AG04449 (cell line): ENCODE measurements at regions of chr22 and their contacts with region 1.

Region 1: DNA sequence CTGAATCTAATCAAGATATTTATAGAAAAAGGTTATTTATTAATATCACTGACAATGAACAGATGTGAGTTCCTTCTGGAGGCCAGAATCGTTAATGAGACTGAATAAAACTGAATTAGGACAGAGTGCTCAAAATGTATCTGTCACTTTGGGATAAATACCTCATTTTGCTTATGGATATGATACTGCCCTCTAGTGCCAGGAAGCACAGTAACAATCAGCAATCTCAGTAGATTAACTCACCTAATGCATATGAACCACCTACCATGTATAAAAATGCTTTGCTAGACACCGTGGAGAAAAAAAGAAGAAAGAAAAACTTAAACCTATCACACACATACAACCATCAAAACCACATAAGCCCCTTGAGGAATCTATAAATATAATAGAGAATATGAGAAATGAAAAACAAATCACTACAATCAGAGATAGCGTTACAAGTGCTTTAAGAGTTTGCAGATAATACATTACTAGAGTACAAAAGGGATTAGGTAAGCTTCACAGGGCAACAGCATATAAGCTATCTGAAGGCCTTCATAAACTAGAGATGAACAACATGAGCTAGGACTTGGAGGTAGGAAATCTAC is 117.4 kb downstream of the SGSM3 start:
- DNase-seq: no peak
- H3K4me3 ChIP-seq: no peak overlapping the region
- CTCF ChIP-seq: peak; percentile 67

Region 2: GRCh38 chr22:40449676-40450035 is 38.1 kb before region 1 on chr22:
- CTCF ChIA-PET with region 1: interaction called, 11 read pairs
- POLR2A ChIA-PET with region 1: no interaction called
- DNase-seq: peak; percentile 19
- H3K4me3 ChIP-seq: no peak overlapping the region
- CTCF ChIP-seq: no peak

Region 3: DNA sequence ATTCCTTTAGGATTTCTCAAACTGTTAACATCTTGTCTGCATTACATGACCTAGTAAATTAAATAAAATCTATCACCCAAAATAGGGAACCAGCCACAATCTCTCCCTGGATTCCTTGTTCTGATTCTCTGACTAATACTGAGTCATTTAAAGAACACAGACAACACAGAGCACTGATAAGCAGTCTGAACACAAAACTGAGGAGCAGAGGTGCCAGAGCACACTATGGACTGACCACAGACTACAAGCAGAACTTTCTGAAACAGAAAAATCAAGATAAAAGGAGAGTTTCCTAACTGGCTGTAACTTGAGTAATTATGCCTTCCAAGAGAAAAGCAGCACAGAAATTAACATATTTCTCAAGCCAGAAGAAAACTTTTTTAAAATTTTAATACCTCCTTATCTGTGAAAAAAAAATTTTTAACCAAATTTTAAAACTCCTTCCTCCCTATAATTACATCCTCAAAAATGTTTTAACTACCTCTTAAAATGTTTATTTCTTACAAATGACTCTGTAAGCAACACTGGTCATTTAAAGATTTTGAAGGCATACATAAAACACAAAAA is 11.5 kb after region 1 on chr22:
- CTCF ChIA-PET with region 1: interaction called, 19 read pairs
- POLR2A ChIA-PET with region 1: interaction called, 3 read pairs
- DNase-seq: peak; percentile 95
- H3K4me3 ChIP-seq: no peak overlapping the region
- CTCF ChIP-seq: no peak

Region 4: DNA sequence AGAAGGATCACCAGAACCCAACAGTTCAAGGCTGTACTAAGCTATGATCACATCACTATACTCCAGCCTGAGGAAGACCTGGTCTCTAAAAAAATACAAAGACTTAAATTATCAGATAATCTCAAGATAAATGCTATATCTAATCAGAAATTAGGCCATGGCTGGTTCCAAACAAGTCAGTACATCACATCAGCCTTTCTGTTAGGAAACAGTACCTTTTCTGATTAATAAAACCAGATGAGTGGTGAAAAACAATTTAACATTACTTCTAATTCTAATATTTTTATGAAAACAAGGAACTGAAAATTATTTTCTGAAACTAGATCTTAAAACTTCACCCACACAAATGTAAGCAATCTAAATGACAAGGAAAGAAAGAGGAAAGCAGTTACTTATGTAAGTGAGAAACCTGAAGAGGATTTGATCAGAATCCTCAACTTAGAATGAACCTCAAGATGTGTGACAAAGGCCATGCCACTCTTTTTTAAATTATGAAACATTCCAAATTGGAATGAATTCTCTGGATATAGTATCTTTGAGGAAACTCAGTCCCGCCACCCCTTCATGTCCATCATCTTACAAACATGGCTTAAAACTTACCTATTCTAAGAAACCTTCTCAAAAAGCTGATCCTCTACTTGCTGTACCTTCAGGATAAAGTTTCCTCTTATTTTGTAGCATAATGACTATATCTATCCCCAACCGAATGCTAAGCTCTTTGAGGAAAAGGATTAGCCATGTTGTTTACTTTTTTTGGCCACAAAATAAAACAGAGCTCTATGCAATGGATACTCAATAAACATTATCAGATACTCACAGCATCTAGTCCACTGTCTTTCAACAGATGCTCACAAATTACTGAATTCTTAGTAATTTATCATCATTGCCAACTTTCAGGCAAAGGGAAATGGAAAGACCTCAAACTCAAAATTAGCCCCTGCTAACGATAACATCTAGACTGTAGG is 16.8 kb after region 1 on chr22:
- CTCF ChIA-PET with region 1: interaction called, 12 read pairs
- POLR2A ChIA-PET with region 1: no interaction called
- DNase-seq: no peak
- H3K4me3 ChIP-seq: no peak overlapping the region
- CTCF ChIP-seq: no peak

Region 5: GRCh38 chr22:40525249-40525884 is 37.6 kb after region 1 on chr22:
- CTCF ChIA-PET with region 1: interaction called, 12 read pairs
- POLR2A ChIA-PET with region 1: no interaction called
- DNase-seq: no peak
- H3K4me3 ChIP-seq: no peak overlapping the region
- CTCF ChIP-seq: peak; percentile 59